H1 (cell line): ENCODE measurements at regions of chr18 and their contacts with region 1.

Region 1: DNA sequence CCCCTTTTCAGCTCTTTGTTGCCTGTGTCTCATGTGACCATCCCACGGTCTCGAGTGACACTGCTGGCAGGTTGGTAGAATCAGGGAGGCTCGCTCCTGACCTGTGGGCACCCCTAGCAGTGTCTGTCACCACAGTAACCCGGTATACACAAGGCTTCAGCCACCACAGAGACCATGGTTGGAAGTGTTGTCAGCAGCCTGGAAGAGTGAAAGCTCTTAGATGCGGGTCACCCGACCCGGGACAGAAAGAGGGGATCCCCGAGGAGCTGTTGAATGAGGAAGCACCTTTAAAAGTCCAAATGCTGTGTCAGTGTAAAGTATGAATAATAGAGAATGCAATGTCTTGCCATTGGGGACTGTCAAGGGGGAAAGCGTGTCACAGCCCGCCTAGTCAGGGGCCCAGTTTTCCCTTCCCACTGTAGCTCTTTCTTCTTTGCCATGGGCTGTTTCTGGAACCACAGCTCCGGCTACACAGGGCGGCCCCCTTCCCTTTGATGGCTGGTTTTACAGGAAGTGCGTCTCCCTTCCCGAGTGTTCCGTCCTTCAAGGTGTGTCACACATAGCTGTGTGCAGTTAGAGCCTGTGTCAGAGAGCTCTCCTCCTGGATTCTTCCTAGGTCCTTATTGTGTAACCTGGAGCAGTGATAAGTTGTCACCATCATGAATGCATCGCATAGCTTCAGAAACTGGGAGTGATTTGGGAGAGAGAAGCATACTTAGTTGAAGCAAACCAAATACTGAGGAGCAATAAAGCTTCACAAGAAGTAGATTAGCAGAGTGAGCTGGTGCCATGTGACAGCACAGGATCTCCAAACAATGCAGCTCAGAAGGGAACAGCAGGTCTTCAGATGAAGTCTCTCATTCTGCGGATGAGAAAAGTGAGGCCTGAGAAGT is 81.4 kb downstream of the MTCL1 start:
- DNase-seq: no peak
- H3K4me3 ChIP-seq: no peak overlapping the region
- H3K27ac ChIP-seq: no peak overlapping the region
- H3K4me1 ChIP-seq: peaks cover 0 to 8% (median 3%) of the 10 kb centered on the region in 4 experiments; a peak in 5 of 7 replicates
- H3K27me3 ChIP-seq: no peaks in the 10 kb centered on the region
- CTCF ChIP-seq: no peak
- EP300 ChIP-seq: no peak
- POLR2A ChIP-seq: no peak
- RAD21 ChIP-seq: no peak

Region 2: DNA sequence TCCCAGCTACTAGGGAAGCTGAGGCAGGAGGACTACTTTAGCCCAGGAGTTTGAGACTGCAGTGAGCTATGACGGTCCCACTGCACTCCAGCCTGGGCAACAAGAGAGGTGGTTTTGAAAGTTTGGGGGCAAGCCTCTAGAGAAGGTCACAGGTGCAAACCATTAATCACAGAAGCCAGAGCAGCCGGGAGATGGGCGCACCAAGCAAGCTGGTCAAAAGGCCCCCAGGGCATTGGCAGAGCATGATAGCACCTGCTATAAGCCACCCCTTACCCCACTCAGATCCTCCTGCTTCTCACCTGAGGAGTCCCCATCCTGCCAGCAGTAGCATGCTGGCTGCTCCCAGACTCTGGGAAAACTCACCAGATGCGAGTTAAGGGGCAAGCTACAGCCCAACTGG is 293.6 kb before region 1 on chr18:
- CTCF ChIA-PET with region 1: no interaction called
- POLR2A ChIA-PET with region 1: no interaction called
- DNase-seq: no peak
- H3K4me3 ChIP-seq: no peak overlapping the region
- H3K27ac ChIP-seq: no peak overlapping the region
- H3K4me1 ChIP-seq: 0 out of 7 replicates have a peak, but pooled peaks cover 0 to 3% (median 0%) of the 10 kb centered on the region in 4 experiments
- H3K27me3 ChIP-seq: no peaks in the 10 kb centered on the region; a peak in 1 of 7 replicates
- CTCF ChIP-seq: no peak
- EP300 ChIP-seq: no peak
- POLR2A ChIP-seq: no peak
- RAD21 ChIP-seq: no peak

Region 3: GRCh38 chr18:8776013-8776943 is 10.4 kb before region 1 on chr18:
- CTCF ChIA-PET with region 1: interaction called, 32 read pairs
- POLR2A ChIA-PET with region 1: interaction called, 3 read pairs
- DNase-seq: no peak
- H3K4me3 ChIP-seq: no peak overlapping the region
- H3K27ac ChIP-seq: no peak overlapping the region
- H3K4me1 ChIP-seq: peaks cover 0 to 9% (median 5%) of the 10 kb centered on the region in 4 experiments
- H3K27me3 ChIP-seq: no peaks in the 10 kb centered on the region
- CTCF ChIP-seq: no peak
- EP300 ChIP-seq: no peak
- POLR2A ChIP-seq: no peak
- RAD21 ChIP-seq: no peak

Region 4: DNA sequence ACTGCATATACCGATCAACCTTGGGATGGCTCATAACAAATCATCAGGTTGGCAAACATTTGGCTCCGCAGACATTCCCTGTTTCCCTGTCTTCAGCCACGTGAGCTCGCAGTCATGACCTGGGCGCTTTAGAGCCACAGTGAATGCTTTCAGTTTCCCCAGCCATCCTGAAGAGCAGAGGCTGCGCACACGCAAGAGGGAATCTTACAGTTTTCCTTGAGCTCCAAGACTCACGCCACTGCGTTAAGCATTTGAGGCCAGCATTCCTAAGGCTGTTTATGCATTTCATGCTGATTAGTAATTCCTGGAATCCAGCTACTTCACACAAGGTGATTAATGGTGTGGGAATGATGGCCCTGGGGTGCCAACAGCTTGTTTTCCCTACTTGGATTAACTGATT is 13.7 kb after region 1 on chr18:
- CTCF ChIA-PET with region 1: interaction called, 17 read pairs
- POLR2A ChIA-PET with region 1: interaction called, 3 read pairs
- DNase-seq: peak in 1 of 2 experiments; percentile 53
- H3K4me3 ChIP-seq: no peak overlapping the region
- H3K27ac ChIP-seq: peak overlapping the region; percentile 15; the same call in 1 of the 2 replicates
- H3K4me1 ChIP-seq: peaks cover 7 to 16% (median 9%) of the 10 kb centered on the region in 4 experiments; a peak in 6 of 7 replicates
- H3K27me3 ChIP-seq: no peaks in the 10 kb centered on the region
- CTCF ChIP-seq: no peak
- EP300 ChIP-seq: no peak
- POLR2A ChIP-seq: no peak
- RAD21 ChIP-seq: no peak

Region 5: DNA sequence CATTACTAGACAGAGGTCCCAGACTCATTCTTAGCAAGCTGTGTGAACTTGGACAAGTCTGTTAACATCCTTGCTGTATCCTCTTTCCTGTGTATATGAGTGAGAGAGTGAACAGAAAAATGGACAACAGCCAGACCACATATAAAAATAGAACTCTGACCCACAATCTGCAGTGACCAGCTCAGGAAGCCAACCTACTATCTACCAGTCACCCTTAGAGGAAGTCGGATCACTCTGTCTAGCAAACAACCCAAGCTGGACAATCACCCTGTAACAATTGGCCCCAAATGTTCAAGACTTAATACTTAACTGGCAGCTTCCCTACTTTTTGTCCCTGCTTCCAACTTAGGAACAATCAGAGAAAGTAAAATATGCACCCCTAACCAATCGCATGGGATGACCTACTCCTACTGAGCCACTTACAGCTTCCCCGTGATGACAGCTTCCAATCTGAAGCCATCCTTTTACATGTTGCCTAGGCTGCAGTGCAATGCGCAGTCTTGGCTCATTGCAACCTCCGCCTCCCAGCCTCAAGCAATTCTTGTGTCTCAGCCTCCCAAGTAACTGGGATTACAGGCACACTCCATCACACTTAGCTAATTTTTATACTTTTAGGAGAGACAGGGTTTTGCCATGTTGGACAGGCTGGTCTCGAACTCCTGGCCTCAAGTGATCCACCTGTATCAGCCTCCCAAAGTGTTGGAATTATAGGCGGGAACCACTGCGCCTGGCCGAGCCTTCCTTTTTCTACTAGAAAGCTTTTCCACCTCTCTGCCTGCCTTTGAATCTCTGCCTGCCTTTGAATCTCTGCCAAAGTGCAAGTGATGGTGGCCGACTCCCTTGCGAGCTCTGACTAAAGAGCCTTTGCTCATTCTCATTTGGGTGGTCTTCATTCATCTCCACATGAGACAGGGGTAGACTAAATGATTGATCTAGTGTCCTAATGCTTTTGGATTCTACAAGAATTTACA is 157.5 kb after region 1 on chr18:
- CTCF ChIA-PET with region 1: no interaction called
- POLR2A ChIA-PET with region 1: no interaction called
- DNase-seq: no peak
- H3K4me3 ChIP-seq: no peak overlapping the region
- H3K27ac ChIP-seq: no peak overlapping the region
- H3K4me1 ChIP-seq: peaks cover 6 to 22% (median 15%) of the 10 kb centered on the region in 4 experiments
- H3K27me3 ChIP-seq: 0 out of 7 replicates have a peak, but pooled peaks cover 0 to 2% (median 0%) of the 10 kb centered on the region in 4 experiments
- CTCF ChIP-seq: no peak
- EP300 ChIP-seq: no peak
- POLR2A ChIP-seq: no peak
- RAD21 ChIP-seq: no peak